HEK293T (cell line): ENCODE measurements at regions of chr1 and their contacts with region 1.

Region 1: DNA sequence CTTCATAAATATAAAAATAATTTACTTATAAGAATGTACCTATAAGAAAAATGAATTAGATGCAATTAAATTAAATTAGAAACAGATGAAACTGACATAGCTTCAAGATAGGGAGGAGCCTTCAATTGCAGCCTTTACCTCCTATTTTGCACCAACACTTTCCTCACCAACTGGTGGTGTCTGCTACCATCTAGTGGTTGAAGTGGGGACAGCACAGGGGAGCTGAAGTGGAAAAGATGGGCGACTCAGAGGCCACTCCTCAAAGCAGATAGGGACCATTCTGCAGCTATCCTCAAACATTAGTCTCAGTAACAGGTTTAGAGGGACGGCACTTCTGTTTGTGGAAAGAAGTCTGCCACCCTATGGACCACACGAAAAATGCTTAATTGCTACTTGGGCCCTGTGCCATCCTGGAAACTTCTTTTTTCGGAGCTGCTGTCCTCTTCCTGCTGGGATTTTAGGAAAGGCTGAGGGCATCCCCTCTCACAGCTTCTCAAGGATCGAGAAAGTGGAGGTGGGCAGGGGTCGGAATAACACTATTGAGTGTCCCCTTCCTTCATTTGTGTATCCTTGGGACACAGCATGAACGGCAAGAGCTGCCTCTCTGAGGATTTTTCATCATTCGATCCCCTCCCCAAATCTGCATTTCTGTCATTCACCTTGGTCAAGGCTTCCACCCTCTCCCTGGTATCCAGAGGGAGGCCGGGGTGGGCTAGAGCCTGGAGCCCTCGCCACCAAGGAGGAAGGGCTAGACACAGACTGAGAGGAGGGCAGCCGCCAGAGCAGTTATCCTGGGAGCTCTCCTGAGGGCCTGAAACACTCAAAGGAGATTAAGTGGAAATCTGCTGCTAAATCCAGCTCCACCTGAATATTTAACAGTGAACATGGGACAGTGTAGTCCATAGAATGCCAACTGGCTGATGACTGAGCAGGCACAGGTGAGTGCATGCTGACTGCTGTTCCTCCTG is 9.6 kb downstream of the PROK1 start:
- DNase-seq: peak; percentile 86

Region 2: DNA sequence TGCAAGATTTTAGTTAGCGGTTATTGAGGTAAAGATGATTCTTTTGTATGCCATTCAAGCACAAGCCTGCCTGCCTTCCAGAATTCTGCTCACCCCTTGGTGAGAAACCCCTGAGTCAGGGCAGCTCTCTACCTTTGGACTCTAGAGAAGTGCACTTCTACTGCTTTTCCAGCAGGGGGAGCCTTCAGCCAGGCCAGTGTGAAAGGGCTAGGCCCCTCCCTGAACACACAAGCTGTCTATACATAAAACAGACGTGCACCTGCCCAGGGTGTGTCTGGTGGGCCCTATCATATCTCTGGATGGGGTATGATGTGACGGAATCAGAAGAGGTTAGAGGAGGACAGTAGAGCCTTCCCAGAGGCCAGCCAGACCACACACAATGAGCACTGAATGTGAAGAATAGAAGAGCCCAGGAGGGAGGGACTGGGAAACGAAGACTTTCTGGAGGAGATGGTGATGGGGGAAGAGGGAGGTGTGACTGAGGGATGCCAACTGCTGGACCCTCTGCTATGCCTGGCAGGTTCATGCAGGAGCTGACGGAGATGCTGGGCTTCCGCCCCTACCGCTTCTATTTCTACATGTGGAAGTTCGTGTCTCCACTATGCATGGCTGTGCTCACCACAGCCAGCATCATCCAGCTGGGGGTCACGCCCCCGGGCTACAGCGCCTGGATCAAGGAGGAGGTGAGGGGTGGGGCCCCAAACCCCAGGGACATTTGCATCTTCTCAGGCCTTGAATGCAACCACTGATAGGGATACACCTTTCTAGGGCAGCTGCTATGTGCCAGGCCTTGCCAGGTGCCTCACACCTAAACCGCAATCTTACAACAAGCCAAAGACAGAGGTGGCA is 263.4 kb before region 1 on chr1:
- CTCF ChIA-PET with region 1: interaction called, 21 read pairs
- POLR2A ChIA-PET with region 1: no interaction called
- DNase-seq: peak; percentile 93

Region 3: DNA sequence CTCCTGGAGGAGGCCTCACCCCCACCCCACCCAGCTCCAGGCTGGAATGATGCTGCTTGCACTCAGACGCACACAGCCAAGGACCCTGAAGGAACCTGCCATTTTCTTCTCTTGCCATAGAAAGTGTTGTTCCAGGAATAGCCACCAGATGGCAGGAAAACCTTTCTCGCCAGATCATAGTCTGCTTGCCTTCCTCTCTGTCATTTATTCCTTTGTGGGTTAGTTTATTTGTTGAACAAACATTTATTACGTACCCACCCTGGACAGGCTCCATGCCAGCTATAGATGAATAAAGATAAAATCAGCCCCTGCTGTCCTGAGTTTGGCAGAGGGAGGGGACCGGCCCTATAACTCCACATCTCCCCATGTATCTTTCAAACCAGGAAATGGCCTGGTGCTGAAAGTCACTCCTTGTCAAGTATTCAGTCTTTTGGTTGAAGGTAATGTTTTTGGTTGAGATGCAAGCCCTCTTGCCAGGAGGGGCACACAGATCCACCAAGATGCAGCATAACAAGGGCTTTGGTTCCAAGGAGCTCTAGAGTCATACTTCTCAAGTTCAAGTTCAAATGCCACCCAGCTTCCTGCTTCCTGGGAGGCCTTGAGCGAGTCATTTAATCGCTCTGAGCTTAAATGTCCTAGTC is 257.4 kb before region 1 on chr1:
- CTCF ChIA-PET with region 1: interaction called, 64 read pairs
- POLR2A ChIA-PET with region 1: interaction called, 11 read pairs
- DNase-seq: peak; percentile 75

Region 4: GRCh38 chr1:110407260-110408210 is 53.0 kb before region 1 on chr1 and contains the start of gene LAMTOR5:
- CTCF ChIA-PET with region 1: interaction called, 52 read pairs
- POLR2A ChIA-PET with region 1: interaction called, 7 read pairs
- DNase-seq: peak; percentile 82

Region 5: DNA sequence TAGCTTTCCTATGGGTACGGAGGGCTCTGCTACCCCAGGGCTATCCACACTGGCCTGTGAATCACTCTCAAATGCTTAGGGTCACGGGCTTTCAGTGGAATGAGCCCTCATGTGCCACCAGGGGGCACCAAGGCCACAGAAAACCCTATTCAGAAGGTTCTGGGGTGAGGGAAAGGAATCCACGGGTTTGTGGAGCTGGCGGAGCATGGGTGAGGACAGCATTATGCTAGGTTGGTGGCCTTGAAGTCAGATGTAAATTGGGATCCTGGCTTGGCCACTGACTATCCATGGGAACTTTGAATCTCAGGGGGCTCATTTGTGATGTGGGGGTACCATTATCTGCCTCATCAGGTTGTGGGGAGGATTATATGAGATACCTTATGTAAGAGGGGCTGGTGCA is 48.0 kb before region 1 on chr1:
- CTCF ChIA-PET with region 1: interaction called, 52 read pairs
- POLR2A ChIA-PET with region 1: interaction called, 7 read pairs
- DNase-seq: peak; percentile 77